PC-9 (cell line): ENCODE measurements at regions of chr11 and their contacts with region 1.

Region 1: GRCh38 chr11:34599406-34599901 is 21.4 kb upstream of the EHF start:
- DNase-seq: peak; percentile 66 to 98
- H3K4me3 ChIP-seq: peak overlapping the region; percentile 24; the same call in 1 of the 2 replicates
- H3K27ac ChIP-seq: peak overlapping the region; percentile 91
- H3K4me1 ChIP-seq: peaks cover 45% of the 10 kb centered on the region
- H3K27me3 ChIP-seq: no peaks in the 10 kb centered on the region
- CTCF ChIP-seq: no peak

Region 2: GRCh38 chr11:33819278-33819677 is 780.2 kb before region 1 on chr11:
- CTCF ChIA-PET with region 1: no interaction called
- POLR2A ChIA-PET with region 1: no interaction called
- intact Hi-C with region 1: no loop called
- DNase-seq: no peak
- H3K4me3 ChIP-seq: no peak overlapping the region
- H3K27ac ChIP-seq: no peak overlapping the region
- H3K4me1 ChIP-seq: no peaks in the 10 kb centered on the region
- H3K27me3 ChIP-seq: peaks cover 18% of the 10 kb centered on the region
- CTCF ChIP-seq: no peak

Region 3: DNA sequence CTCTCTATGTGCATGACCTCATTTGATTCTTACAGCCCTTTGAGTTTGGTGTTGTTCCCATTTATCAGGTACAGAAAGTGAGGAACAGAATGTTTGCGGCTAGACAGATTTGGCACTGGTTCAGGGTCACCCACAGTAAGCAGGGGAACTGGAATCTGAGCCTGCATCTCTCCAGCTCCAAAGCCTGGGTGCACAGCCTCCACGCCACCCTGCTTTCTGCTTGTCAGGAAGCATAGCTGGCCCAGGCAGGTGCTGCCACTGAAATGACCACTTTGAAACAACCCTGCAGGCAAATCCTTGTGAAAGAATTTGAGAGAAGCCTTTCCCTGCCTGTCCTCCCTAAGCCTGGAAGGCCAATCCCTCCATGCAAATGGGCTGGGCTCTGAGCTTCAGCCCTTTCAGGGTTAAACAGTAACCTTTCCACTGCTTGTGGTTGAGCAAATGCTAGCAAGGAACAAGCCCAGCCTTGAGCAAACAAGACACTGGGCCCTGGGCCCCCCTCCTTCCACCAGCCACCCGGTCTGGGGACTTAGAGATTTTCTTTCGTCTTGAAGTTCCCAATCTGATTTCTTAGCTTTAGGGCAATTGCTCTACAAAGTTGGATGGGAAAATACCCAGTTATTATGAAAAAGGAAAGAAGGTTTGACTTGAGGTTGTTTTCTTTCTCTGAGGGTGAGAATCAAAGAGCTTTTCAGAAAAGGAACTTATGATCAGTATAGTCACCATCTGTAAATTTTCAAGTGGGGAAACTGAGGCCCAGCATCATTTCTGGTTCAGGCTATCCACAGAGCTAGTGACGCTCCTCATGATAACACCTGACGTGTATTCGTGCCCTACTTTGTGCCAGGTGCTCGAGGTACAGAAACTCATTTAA is 40.8 kb after region 1 on chr11:
- CTCF ChIA-PET with region 1: no interaction called
- POLR2A ChIA-PET with region 1: no interaction called
- intact Hi-C with region 1: loop called (anchors 1 kb)
- DNase-seq: peak; percentile 92 to 100
- H3K4me3 ChIP-seq: peak overlapping the region; percentile 38; the same call in 1 of the 2 replicates
- H3K27ac ChIP-seq: peak overlapping the region; percentile 84
- H3K4me1 ChIP-seq: peaks cover 98% of the 10 kb centered on the region
- H3K27me3 ChIP-seq: no peaks in the 10 kb centered on the region
- CTCF ChIP-seq: no peak

Region 4: DNA sequence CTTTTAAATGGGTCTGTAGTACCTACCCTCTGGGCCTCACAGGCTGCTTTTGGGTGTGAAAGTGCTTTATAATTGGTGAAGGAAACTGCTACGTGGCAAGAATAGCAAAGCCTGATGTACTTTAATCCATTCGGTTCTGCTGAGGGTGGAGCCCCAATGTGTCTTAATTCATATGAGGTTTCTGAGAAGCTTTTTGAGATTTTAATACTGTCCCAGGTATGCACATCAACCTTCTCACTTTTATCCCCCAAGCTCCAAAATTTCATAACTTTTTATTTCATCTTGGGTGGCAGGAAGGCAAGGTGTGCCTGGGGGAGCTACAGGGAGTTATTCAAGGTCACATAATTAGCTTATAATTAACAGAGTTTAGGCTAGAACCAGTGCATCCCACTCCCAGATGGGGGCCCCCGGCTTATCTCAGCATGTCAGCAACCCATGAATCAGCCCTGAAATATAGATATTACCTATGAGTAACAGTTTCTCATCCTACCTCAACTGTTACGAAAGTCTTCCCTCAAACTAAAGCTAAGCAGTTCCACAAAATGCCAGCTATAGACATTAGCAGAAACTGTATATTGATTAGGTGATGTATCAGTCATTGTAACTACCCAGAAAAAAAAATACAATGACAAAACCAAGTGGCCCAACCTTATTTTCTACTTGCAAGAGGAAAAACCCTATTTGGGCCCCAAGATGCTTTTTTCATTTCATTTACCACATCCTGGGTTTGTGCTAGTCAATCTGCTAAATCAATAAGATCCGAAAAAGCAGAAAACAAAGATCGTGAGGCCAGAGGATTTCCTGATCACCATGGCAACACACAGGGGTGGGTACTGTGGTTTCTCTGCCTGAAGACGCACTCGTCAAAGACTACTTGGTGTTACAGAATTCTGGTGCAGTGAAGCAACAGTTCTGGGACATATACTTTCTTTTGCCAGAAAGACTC is 566.2 kb after region 1 on chr11:
- CTCF ChIA-PET with region 1: interaction called, 12 read pairs
- POLR2A ChIA-PET with region 1: no interaction called
- intact Hi-C with region 1: no loop called
- DNase-seq: peak in 1 of 2 experiments; percentile 85
- H3K4me3 ChIP-seq: peak overlapping the region; percentile 36
- H3K27ac ChIP-seq: peak overlapping the region; percentile 94
- H3K4me1 ChIP-seq: peaks cover 100% of the 10 kb centered on the region
- H3K27me3 ChIP-seq: no peaks in the 10 kb centered on the region
- CTCF ChIP-seq: no peak